Mammary epithelial cell (primary cell): ENCODE measurements at regions of chr11 and their contacts with region 1.

Region 1: DNA sequence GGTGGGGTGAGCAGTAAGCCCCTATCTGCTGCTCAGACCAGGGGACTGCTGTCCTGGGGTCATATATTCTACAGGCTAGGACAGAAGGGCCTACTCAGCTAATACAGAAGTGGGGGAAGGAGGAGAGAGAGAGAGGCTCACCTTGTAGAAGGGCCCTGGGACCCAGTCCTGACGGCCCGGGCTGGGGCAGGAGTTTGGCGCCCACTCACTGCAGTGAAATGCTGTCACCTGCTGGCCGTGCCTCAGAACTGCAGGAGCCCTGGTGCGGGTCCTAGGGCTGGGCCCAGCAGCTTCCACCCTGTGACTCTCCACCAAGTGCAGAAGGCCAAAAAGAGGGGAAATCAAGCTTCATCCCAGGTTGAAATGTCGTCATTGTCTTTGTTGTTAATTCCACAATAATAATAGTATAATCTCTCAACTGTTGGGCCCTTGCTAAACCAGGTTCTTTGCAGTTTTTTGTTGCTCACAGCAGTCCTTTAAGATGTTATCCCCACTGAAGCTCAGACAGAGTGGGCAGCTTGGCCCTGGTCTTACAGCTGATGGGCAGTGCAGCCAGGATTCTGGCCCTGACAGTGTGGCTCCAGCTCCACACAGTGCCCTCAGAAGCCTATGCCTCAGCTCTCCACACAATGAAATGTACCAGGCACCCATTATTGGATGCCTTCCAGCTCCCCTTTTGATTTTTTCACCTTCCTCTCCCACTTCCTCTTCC is 29.6 kb downstream of the TRIM29 start:
- DNase-seq: peak; percentile 50
- H3K4me3 ChIP-seq: no peak overlapping the region
- H3K27ac ChIP-seq: no peak overlapping the region
- H3K4me1 ChIP-seq: peaks cover 5% of the 10 kb centered on the region
- H3K27me3 ChIP-seq: no peaks in the 10 kb centered on the region
- CTCF ChIP-seq: peak; percentile 99 to 100

Region 2: DNA sequence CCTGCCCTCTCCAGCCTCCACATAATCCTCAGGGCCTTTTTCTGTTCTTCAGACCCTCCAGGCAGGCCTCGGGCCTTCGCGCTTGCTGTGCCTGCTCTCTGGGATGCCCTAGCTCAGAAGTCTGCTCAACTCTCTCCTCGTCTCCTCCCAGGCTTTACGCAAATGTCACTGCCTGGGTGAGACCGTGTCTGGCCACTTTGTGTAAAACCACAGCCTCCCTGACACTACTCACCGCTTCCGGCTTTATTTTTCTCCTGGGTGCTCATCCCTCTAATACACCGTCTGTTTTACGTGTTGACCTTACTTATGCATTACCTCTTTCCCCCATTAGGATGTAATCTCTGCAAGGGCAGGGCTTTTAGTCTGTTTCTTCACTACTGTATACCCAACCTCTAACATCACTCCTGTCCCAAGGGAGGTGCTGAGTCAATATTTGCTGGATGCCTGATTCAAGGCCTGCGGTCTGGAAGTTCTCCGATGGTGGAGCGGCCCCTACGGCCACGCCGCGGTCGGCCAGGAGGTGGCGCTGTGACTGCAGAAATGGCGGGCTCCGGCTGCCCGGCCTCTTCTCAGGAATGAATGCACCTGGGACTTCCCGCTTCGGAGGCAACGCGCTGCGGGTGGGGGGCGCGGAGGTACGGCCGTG is 627.2 kb before region 1 on chr11:
- CTCF ChIA-PET with region 1: no interaction called
- dilution Hi-C with region 1: no loop called
- in situ Hi-C with region 1: no loop called
- intact Hi-C with region 1: loop called (anchors 1 kb)
- DNase-seq: peak; percentile 78
- H3K4me3 ChIP-seq: no peak overlapping the region
- H3K27ac ChIP-seq: no peak overlapping the region
- H3K4me1 ChIP-seq: no peaks in the 10 kb centered on the region
- H3K27me3 ChIP-seq: no peaks in the 10 kb centered on the region
- CTCF ChIP-seq: peak; percentile 91 to 97

Region 3: DNA sequence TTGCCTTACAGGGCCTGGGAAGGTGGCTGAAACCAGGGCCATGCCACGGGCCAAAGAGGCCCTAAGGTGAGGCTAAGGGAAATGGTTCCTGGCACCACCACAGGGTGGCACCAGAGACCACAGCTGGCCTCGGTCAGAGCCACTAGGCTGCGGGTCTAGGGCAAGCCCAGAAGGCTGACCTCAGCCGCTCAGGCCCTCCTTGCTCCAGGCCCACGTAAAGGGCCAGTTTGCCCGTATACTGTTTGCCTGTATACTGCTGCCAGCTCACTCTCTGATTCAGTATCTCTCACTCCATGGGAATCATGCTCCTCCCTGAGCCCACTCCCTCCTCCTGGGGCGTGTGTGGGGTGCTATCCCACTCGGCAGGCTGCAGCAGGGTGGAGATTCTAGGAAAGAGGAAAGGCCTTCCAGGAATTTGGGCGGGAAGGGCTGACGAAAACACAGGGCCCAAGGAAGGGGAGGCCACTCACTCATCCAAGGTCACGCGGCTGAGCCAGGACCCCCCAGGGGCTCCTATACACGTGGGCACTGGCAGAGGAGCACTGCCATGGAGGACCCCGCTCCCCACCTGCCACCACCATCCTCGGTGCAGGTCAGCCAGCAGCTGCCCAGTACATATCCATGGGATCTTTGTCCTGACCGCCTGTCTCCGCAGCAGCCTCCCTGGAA is 441.7 kb before region 1 on chr11:
- CTCF ChIA-PET with region 1: no interaction called
- dilution Hi-C with region 1: no loop called
- in situ Hi-C with region 1: loop called (anchors 25 kb)
- intact Hi-C with region 1: loop called (anchors 1 kb)
- DNase-seq: peak; percentile 58
- H3K4me3 ChIP-seq: no peak overlapping the region
- H3K27ac ChIP-seq: peak overlapping the region; percentile 4
- H3K4me1 ChIP-seq: peaks cover 26% of the 10 kb centered on the region
- H3K27me3 ChIP-seq: no peaks in the 10 kb centered on the region
- CTCF ChIP-seq: peak; percentile 76 to 92

Region 4: DNA sequence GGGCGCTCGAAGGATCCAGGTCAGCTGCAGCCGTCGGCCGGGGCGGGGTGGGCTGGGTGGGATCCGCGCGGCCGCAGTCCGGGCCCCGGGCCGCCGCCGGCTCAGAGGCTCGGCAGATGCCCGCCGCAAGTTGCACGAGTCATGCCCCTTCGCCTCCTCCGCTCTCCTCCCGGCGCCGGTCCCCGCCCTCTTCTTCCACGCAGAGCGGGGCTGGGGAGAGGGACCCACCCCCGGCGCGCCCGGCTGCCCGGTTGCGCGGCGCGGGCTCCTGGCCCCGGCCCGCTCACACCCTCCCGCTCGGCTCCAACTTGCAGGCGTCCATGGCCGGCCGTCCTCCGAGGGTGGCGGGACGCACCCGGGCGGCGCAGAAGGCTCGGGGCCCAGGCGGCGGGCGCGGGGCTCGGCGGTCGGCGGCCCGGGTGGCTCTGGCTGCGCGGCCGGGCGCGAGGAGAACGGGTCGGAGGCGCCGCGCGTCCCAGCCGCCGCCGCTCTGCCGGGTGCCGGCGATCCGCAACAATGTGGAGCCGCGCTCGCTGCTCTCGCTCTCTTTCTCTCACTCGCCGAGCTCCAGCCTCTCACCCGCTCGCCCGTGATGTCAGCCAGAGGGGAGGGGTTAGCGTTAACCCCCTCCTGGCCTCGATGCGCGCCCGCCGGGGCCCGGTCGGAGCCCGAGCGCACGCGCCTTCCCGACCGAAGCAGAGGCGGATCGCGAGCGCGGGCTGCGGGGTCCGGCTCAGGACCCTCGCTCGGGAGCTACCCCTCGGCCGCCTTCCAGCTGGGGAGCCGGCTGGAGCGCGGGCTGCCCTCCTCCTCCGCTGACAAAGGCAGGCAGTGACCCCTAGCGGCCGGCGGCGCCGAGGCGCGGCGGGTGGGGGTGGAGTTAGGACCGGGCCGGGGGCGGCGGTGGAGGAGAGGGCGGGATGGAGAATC is 379.4 kb before region 1 on chr11 and contains the start of gene NECTIN1:
- CTCF ChIA-PET with region 1: no interaction called
- dilution Hi-C with region 1: no loop called
- in situ Hi-C with region 1: loop called in 1 of 2 experiments (anchors 25 kb)
- intact Hi-C with region 1: loop called (anchors 2 kb)
- DNase-seq: peak; percentile 86
- H3K4me3 ChIP-seq: peak within 1 kb of the TSS; percentile 79 to 92 (median 88)
- H3K27ac ChIP-seq: peak within 1 kb of the TSS; percentile 74
- H3K4me1 ChIP-seq: peaks cover 33% of the 10 kb centered on the region
- H3K27me3 ChIP-seq: no peaks in the 10 kb centered on the region
- CTCF ChIP-seq: peak; percentile 48 to 92
- total RNA-seq, gene NECTIN1: 60.8 to 162 TPM

Region 5: GRCh38 chr11:119999220-119999619 is 109.1 kb before region 1 on chr11:
- CTCF ChIA-PET with region 1: no interaction called
- dilution Hi-C with region 1: no loop called
- in situ Hi-C with region 1: loop called in 1 of 2 experiments (anchors 10 kb)
- intact Hi-C with region 1: loop called (anchors 1 kb)
- DNase-seq: peak; percentile 6
- H3K4me3 ChIP-seq: no peak overlapping the region
- H3K27ac ChIP-seq: no peak overlapping the region
- H3K4me1 ChIP-seq: peaks cover 9% of the 10 kb centered on the region
- H3K27me3 ChIP-seq: no peaks in the 10 kb centered on the region
- CTCF ChIP-seq: peak; percentile 40 to 56

Region 6: GRCh38 chr11:120024046-120024445 is 84.3 kb before region 1 on chr11:
- CTCF ChIA-PET with region 1: no interaction called
- dilution Hi-C with region 1: loop called (anchors 5 kb)
- in situ Hi-C with region 1: no loop called
- intact Hi-C with region 1: no loop called
- DNase-seq: no peak
- H3K4me3 ChIP-seq: no peak overlapping the region
- H3K27ac ChIP-seq: no peak overlapping the region
- H3K4me1 ChIP-seq: peaks cover 11% of the 10 kb centered on the region
- H3K27me3 ChIP-seq: no peaks in the 10 kb centered on the region
- CTCF ChIP-seq: no peak

Region 7: DNA sequence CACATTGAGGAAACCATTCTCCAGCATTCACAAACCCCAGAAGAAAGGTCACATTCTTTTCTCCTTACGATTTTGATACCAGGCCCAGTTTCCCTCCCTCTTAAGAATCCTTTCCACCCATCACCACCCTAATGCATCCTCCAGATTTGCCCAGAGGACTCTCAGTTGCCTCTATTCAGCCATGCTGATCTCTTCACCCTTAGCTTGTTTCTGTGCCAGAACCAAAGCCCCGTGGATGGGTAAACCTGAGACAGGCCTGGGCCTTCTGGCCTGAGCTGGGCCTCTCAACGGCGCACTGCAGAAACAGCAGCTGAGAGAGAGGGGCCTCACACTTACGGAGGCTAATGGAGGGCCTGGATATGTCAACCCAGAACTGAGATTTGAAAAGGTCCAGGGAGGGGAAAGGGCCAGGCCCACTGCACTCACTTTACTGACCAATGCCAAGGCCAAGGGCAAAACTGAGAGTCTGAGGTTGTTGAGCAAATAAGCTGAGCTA is 70.3 kb after region 1 on chr11:
- CTCF ChIA-PET with region 1: no interaction called
- dilution Hi-C with region 1: loop called (anchors 5 kb)
- in situ Hi-C with region 1: no loop called
- intact Hi-C with region 1: no loop called
- DNase-seq: no peak
- H3K4me3 ChIP-seq: no peak overlapping the region
- H3K27ac ChIP-seq: no peak overlapping the region
- H3K4me1 ChIP-seq: no peaks in the 10 kb centered on the region
- H3K27me3 ChIP-seq: no peaks in the 10 kb centered on the region
- CTCF ChIP-seq: no peak